ENCODE measurements at regions of chr16 and their contacts with region 1.

Region 1: GRCh38 chr16:81815429-81815766 is 36.3 kb downstream of the PLCG2 start:
- DNase-seq: no peak
- H3K4me3 ChIP-seq: no peak overlapping the region
- H3K27ac ChIP-seq: no peak overlapping the region
- H3K27me3 ChIP-seq: peaks cover 0 to 3% (median 0%) of the 10 kb centered on the region in 45 donors
- CTCF ChIP-seq: no peak

Region 2: GRCh38 chr16:81778861-81779535 is 36.4 kb before region 1 on chr16 and contains the start of gene PLCG2:
- intact Hi-C with region 1: no loop called
- DNase-seq: peak in 2 of 10 donors; percentile 46 to 54
- H3K4me3 ChIP-seq: peak within 1 kb of the TSS in 57 of 59 donors; percentile 10 to 67 (median 48)
- H3K27ac ChIP-seq: peak within 1 kb of the TSS in 13 of 59 donors; percentile 13 to 71 (median 42)
- H3K27me3 ChIP-seq: peaks cover 0 to 48% (median 21%) of the 10 kb centered on the region in 45 donors
- CTCF ChIP-seq: no peak
- total RNA-seq, gene PLCG2: 3.2 to 24.2 (median 10.4) TPM

Region 3: GRCh38 chr16:81798311-81799137 is 16.9 kb before region 1 on chr16:
- intact Hi-C with region 1: loop called in 1 of 2 experiments (anchors 1 kb)
- DNase-seq: no peak
- H3K4me3 ChIP-seq: no peak overlapping the region
- H3K27ac ChIP-seq: peak overlapping the region in 5 of 59 donors; percentile 32 to 55 (median 33)
- H3K27me3 ChIP-seq: peaks cover 0 to 4% (median 0%) of the 10 kb centered on the region in 45 donors
- CTCF ChIP-seq: no peak

Measured in dorsolateral prefrontal cortex (tissue), 120 donors.